Caco-2 (cell line): ENCODE measurements at regions of chr6 and their contacts with region 1.

Region 1: GRCh38 chr6:20534295-20535262 is at the start of gene CDKAL1:
- DNase-seq: peak; percentile 85 to 90
- H3K4me3 ChIP-seq: peak within 1 kb of the TSS; percentile 87
- H3K4me3 Mint-ChIP-seq: peak within 1 kb of the TSS; percentile 93
- H3K27ac Mint-ChIP-seq: peak within 1 kb of the TSS; percentile 90
- H3K4me1 ChIP-seq: peaks cover 5% of the 10 kb centered on the region; the same call in 1 of the 2 replicates
- H3K4me1 Mint-ChIP-seq: peaks cover 11% of the 10 kb centered on the region
- H3K27me3 ChIP-seq: no peaks in the 10 kb centered on the region
- H3K27me3 Mint-ChIP-seq: no peaks in the 10 kb centered on the region
- CTCF ChIP-seq: no peak
- total RNA-seq, gene CDKAL1: 18.7 and 18.8 TPM in 2 replicates

Region 2: GRCh38 chr6:20401205-20402091 is 133.1 kb before region 1 on chr6 and contains the start of gene E2F3:
- CTCF ChIA-PET with region 1: interaction called, 3 read pairs
- POLR2A ChIA-PET with region 1: interaction called, 5 read pairs
- intact Hi-C with region 1: loop called (anchors 1 kb)
- DNase-seq: peak; percentile 99 to 100
- H3K4me3 ChIP-seq: peak within 1 kb of the TSS; percentile 91
- H3K4me3 Mint-ChIP-seq: peak within 1 kb of the TSS; percentile 91
- H3K27ac Mint-ChIP-seq: peak within 1 kb of the TSS; percentile 97
- H3K4me1 ChIP-seq: peaks cover 7% of the 10 kb centered on the region
- H3K4me1 Mint-ChIP-seq: no peaks in the 10 kb centered on the region
- H3K27me3 ChIP-seq: no peaks in the 10 kb centered on the region
- H3K27me3 Mint-ChIP-seq: no peaks in the 10 kb centered on the region
- CTCF ChIP-seq: no peak
- total RNA-seq, gene E2F3: 15.4 and 16.3 TPM in 2 replicates

Region 3: GRCh38 chr6:20610636-20611370 is 76.2 kb after region 1 on chr6:
- CTCF ChIA-PET with region 1: no interaction called
- POLR2A ChIA-PET with region 1: no interaction called
- intact Hi-C with region 1: no loop called
- DNase-seq: no peak
- H3K4me3 ChIP-seq: no peak overlapping the region
- H3K4me3 Mint-ChIP-seq: no peak overlapping the region
- H3K27ac Mint-ChIP-seq: no peak overlapping the region
- H3K4me1 ChIP-seq: peaks cover 10% of the 10 kb centered on the region
- H3K4me1 Mint-ChIP-seq: peaks cover 12% of the 10 kb centered on the region
- H3K27me3 ChIP-seq: no peaks in the 10 kb centered on the region
- H3K27me3 Mint-ChIP-seq: no peaks in the 10 kb centered on the region
- CTCF ChIP-seq: no peak